MCF 10A (cell line): ENCODE measurements at regions of chr11 and their contacts with region 1.

Region 1: GRCh38 chr11:12802418-12803085 is 128.3 kb downstream of the TEAD1 start:
- DNase-seq: peak; percentile 94
- H3K4me3 Mint-ChIP-seq: peak overlapping the region; percentile 22
- H3K27ac Mint-ChIP-seq: peak overlapping the region; percentile 91
- H3K4me1 Mint-ChIP-seq: peaks cover 66% of the 10 kb centered on the region
- H3K27me3 Mint-ChIP-seq: no peaks in the 10 kb centered on the region
- CTCF ChIP-seq: no peak

Region 2: GRCh38 chr11:12680246-12680939 is 122.2 kb before region 1 on chr11:
- CTCF ChIA-PET with region 1: interaction called, 8 read pairs
- POLR2A ChIA-PET with region 1: interaction called, 93 read pairs
- intact Hi-C with region 1: no loop called
- DNase-seq: peak; percentile 93
- H3K4me3 Mint-ChIP-seq: peak overlapping the region; percentile 90
- H3K27ac Mint-ChIP-seq: peak overlapping the region; percentile 75
- H3K4me1 Mint-ChIP-seq: peaks cover 63% of the 10 kb centered on the region
- H3K27me3 Mint-ChIP-seq: no peaks in the 10 kb centered on the region
- CTCF ChIP-seq: no peak

Region 3: DNA sequence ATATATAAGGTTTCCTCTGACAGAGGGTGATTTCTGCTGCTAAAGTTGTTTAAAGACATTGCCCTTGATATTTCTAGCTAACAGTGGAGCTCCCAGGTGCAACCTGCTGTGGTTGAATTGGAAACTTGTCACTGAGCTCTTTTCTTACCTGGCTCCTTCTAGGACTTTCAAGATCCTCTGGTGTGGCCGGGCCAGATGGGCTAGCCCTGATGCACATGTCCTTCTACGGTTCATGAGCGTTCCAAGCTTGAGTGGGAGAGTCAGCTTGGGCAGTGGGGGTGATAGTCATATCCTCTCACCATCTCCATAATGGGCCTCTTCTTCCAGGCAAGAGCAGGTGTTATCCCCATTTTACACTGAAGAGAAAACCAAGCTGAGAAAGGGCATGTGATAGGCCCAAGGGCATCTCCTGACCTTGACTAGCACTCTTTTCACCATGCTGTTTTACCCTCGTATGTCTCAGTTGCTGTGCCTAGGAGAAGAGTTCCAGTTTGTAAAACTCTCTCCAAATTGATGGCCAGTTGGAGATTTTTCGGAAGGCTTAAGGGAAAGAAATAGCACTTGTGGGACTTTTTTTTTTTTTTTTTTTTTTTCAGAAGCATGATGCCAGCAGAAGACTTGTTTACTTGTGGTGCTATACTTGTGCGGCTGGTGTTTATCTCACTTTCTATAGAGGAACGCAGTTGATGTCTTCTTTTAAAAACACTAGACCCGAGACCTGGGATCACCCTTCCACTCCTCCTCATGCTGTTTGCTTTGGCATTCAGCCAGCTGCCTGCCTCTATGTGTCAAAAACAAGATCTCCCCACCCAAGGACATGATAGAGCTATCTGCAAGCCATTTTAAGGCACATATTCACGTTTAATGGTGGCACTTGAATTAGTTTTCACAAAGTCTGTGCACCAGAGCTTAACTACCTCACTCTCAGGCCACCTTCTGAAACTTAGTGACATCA is 95.7 kb before region 1 on chr11:
- CTCF ChIA-PET with region 1: no interaction called
- POLR2A ChIA-PET with region 1: interaction called, 13 read pairs
- intact Hi-C with region 1: no loop called
- DNase-seq: peak; percentile 83
- H3K4me3 Mint-ChIP-seq: peak overlapping the region; percentile 24
- H3K27ac Mint-ChIP-seq: peak overlapping the region; percentile 82
- H3K4me1 Mint-ChIP-seq: peaks cover 70% of the 10 kb centered on the region
- H3K27me3 Mint-ChIP-seq: no peaks in the 10 kb centered on the region
- CTCF ChIP-seq: no peak

Region 4: DNA sequence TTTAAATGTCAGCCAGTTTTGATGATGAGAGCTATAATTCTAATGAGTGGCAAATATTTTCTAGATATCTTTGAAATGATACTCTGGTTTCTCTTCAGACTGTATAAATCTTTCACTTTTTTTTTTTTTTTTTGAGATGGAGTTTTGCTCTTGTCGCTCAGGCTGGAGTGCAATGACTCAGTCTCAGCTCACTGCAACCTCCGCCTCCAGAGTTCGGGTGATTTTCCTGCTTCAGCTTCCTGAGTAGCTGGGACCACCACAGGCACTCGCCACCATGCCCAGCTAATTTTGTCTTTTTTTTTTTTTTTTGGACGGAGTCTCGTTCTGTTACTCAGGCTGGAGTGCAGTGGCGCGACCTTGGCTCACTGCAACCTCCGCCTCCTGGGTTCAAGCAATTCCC is 14.7 kb before region 1 on chr11:
- CTCF ChIA-PET with region 1: interaction called, 3 read pairs
- POLR2A ChIA-PET with region 1: interaction called, 13 read pairs
- intact Hi-C with region 1: no loop called
- DNase-seq: peak; percentile 68
- H3K4me3 Mint-ChIP-seq: no peak overlapping the region
- H3K27ac Mint-ChIP-seq: no peak overlapping the region
- H3K4me1 Mint-ChIP-seq: peaks cover 35% of the 10 kb centered on the region
- H3K27me3 Mint-ChIP-seq: no peaks in the 10 kb centered on the region
- CTCF ChIP-seq: no peak

Region 5: DNA sequence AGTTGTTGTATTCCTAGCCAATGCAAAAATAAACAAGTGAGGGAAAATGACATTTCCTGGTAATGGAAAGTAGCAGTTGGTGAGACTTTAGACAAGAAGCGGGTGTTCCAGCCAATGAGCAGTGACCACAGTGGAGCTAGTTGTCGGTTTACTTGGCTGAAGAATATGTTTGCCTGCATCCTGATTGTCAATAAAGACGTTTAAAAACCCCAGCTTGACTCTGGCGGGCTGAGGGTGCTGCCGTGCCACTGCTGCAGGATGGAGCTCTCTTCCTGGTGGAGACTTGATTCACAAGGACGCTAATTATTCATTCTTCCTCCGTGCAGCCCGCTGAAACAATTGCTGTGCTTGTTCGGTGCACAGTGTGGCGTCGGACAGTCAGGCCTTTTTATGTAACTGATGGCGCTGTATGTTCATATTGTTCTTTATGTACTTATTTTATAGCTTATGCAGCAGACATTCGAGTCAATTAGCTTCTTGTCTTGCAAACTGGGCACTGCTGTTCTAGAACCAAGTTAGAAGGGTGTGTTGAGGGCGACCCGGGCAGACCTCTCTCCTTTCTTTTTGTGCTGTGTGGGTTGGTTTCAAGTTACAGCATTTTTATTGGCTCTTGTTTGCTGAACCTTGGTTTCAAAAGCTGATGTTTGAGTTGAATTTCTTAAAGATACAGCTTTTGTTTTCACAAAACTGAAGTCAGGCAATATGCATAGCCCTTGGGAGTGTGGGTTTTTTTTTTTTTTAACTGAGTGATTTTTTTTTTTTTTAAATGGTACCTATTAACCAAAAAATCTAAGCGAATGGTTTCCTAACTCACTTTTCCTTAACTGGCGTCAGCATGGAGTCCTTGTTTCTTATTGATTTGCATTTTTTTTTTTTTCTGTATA is 25.6 kb after region 1 on chr11:
- CTCF ChIA-PET with region 1: interaction called, 3 read pairs
- POLR2A ChIA-PET with region 1: interaction called, 14 read pairs
- intact Hi-C with region 1: no loop called
- DNase-seq: peak; percentile 79
- H3K4me3 Mint-ChIP-seq: peak overlapping the region; percentile 80
- H3K27ac Mint-ChIP-seq: peak overlapping the region; percentile 85
- H3K4me1 Mint-ChIP-seq: peaks cover 29% of the 10 kb centered on the region
- H3K27me3 Mint-ChIP-seq: no peaks in the 10 kb centered on the region
- CTCF ChIP-seq: no peak

Region 6: GRCh38 chr11:12942157-12942556 is 139.6 kb after region 1 on chr11:
- CTCF ChIA-PET with region 1: no interaction called
- POLR2A ChIA-PET with region 1: no interaction called
- intact Hi-C with region 1: no loop called
- DNase-seq: no peak
- H3K4me3 Mint-ChIP-seq: no peak overlapping the region
- H3K27ac Mint-ChIP-seq: no peak overlapping the region
- H3K4me1 Mint-ChIP-seq: no peaks in the 10 kb centered on the region
- H3K27me3 Mint-ChIP-seq: no peaks in the 10 kb centered on the region
- CTCF ChIP-seq: no peak